Activated CD4-positive, alpha-beta memory T cell treated with anti-CD3 and anti-CD28 coated beads for 36 hours (primary cell): ENCODE measurements at regions of chr9 and their contacts with region 1.

Region 1: DNA sequence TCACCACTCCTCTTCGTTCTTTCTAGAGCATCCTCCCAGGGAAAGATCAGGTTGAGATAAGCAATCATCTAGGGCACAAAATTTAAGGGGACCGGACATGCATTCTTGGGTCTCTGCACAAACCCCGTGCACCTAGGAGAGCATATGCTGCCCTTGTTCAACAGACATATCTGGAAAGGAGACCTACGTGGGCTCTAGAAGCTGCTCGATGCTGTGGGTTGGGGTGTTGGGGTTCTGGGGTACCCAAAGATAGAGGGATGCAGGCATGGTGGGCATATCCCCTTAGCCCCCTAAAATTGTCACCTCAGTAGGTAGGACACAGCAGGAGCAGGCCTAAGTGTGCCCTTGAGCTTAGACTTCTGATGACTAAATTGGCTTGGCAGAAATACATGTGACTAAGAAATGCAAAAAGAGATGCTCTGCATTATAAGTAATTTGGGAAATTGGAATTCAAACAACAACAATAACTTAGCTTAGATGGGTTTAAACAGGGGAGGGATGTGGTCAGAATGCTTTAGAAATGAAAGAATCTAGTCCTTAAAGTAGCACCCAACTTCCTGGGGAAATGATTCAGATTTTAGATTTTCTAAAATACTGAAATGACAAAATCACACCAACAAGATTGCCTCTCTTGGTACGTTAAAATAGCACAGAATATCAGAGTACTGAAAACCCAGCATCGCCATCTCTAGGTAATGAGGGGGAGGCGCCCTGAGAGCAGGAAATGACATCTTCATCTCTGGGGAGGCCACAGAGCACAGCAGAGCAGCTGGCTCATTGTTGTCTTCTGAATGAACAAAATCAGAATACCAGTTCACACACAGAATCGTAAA is 172.3 kb downstream of the GNA14 start:
- DNase-seq: peak; percentile 85
- H3K4me3 Mint-ChIP-seq: no peak overlapping the region
- H3K27ac Mint-ChIP-seq: peak overlapping the region; percentile 91
- H3K4me1 Mint-ChIP-seq: peaks cover 30% of the 10 kb centered on the region
- H3K27me3 Mint-ChIP-seq: no peaks in the 10 kb centered on the region

Region 2: DNA sequence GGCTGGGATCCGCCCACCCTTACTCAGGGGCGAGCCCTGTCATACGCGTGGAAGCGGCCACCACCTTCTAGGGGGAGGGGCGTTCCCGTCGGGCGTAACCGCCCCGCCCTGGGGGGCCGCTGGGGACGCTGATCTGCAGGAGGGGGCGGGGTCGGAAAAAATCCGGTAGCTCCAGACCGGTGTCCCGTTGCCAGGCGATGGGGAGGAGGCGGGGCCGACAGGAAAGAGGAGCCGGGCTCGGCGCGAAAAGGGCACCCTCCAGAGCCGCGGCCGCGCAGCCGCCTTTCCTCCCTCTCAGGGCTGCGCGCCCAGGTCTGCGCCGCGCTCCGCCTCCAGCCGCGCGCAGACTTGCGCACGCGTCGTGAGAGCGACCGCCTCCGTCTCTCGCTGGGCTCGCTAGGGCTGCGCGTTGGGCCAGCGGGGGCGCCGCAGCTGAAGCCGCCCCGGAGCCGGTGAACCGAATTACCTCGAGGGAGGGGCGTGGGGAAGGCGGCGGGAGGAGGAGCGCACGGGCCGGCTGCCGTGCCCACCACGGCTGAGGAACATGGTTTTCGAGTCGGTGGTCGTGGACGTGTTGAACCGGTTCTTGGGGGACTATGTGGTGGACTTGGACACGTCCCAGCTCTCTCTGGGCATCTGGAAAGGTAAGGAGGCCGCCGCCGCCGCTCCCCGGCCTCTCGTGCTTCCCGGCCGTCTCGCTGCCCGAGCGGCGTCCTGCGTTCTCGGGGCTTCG is 298.5 kb before region 1 on chr9 and contains the start of gene VPS13A:
- CTCF ChIA-PET with region 1: interaction called, 3 read pairs
- POLR2A ChIA-PET with region 1: no interaction called
- intact Hi-C with region 1: loop called (anchors 1 kb)
- DNase-seq: peak; percentile 97
- H3K4me3 Mint-ChIP-seq: peak within 1 kb of the TSS; percentile 86
- H3K27ac Mint-ChIP-seq: peak within 1 kb of the TSS; percentile 87
- H3K4me1 Mint-ChIP-seq: peaks cover 22% of the 10 kb centered on the region
- H3K27me3 Mint-ChIP-seq: no peaks in the 10 kb centered on the region
- total RNA-seq, gene VPS13A: 27.3 to 30.4 TPM

Region 3: DNA sequence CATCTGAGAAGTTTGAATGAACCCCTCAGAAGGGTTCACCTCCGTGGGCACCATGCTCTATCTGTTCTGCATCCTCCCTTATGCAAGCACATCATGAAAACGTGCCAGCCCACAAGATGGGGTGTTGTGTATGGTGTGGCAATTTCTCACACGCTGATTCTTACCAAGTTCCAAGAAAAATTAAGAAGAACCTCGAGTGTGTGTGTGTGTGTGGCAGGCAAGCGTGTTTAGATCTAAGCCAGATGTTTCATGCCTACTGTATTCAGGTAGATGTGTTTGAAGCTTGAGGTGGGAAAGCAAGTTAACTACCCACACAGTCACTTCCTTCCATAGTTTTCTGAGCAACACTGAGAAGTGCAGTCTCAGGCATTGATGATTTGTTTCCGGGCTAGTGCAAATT is 250.0 kb after region 1 on chr9:
- CTCF ChIA-PET with region 1: no interaction called
- POLR2A ChIA-PET with region 1: interaction called, 3 read pairs
- intact Hi-C with region 1: loop called (anchors 1 kb)
- DNase-seq: peak; percentile 62
- H3K4me3 Mint-ChIP-seq: no peak overlapping the region
- H3K27ac Mint-ChIP-seq: peak overlapping the region; percentile 77
- H3K4me1 Mint-ChIP-seq: peaks cover 45% of the 10 kb centered on the region
- H3K27me3 Mint-ChIP-seq: no peaks in the 10 kb centered on the region

Region 4: GRCh38 chr9:77899679-77900354 is 424.0 kb after region 1 on chr9:
- CTCF ChIA-PET with region 1: no interaction called
- POLR2A ChIA-PET with region 1: no interaction called
- intact Hi-C with region 1: loop called (anchors 10 kb)
- DNase-seq: no peak
- H3K4me3 Mint-ChIP-seq: no peak overlapping the region
- H3K27ac Mint-ChIP-seq: no peak overlapping the region
- H3K4me1 Mint-ChIP-seq: peaks cover 34% of the 10 kb centered on the region
- H3K27me3 Mint-ChIP-seq: no peaks in the 10 kb centered on the region

Region 5: GRCh38 chr9:78121488-78121887 is 645.6 kb after region 1 on chr9:
- CTCF ChIA-PET with region 1: no interaction called
- POLR2A ChIA-PET with region 1: no interaction called
- intact Hi-C with region 1: loop called (anchors 1 kb)
- DNase-seq: peak; percentile 76
- H3K4me3 Mint-ChIP-seq: no peak overlapping the region
- H3K27ac Mint-ChIP-seq: no peak overlapping the region
- H3K4me1 Mint-ChIP-seq: peaks cover 41% of the 10 kb centered on the region
- H3K27me3 Mint-ChIP-seq: no peaks in the 10 kb centered on the region